ENCODE measurements at regions of chr1 and their contacts with region 1.

Region 1: GRCh38 chr1:44217809-44218410 is 4.6 kb downstream of the DMAP1 start:
- DNase-seq: peak; percentile 73
- CTCF ChIP-seq: peak; percentile 87

Region 2: GRCh38 chr1:44090429-44091252 is 127.3 kb before region 1 on chr1:
- CTCF ChIA-PET with region 1: interaction called, 10 read pairs
- POLR2A ChIA-PET with region 1: no interaction called
- DNase-seq: no peak
- CTCF ChIP-seq: no peak

Region 3: GRCh38 chr1:44103270-44104131 is 114.4 kb before region 1 on chr1:
- CTCF ChIA-PET with region 1: no interaction called
- POLR2A ChIA-PET with region 1: no interaction called
- DNase-seq: no peak
- CTCF ChIP-seq: no peak

Region 4: DNA sequence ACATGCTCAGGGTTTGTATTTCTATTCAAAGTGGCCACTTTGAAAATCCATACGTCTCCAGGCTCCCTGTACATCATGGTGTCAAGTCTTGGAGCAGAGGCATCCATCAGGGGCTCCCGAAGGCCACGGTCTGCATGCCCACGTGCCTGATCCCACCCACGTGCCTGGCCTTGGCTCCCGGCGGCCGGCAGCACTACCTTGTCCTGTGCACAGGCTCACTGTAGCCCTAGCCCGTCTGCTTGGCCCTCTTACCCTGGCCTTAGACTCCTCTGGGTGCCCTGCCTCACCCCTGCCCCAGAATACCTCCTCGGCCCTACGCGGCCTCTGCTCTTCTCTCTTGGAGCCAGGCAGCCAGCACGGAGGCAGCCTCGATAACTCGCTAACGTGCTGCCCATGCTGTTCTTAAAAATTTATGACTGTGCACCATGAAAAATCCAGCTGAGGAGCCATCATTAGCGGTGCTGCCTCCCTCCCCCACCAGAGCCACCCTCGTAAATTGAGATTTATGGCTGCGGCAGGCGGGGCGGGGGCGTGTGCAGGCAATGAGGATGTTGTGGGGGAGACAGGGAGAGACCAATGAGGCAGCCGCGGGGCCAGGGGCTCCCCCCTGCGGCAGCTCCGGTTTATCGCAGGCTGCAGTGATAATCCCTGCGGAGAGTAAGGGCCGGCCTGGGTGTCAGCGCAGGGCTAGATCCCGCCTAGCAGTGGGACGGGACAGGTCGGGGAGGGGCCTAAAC is 20.0 kb after region 1 on chr1:
- CTCF ChIA-PET with region 1: interaction called, 72 read pairs
- POLR2A ChIA-PET with region 1: no interaction called
- DNase-seq: peak; percentile 86
- CTCF ChIP-seq: peak; percentile 46

Region 5: GRCh38 chr1:44270686-44271628 is 53.0 kb after region 1 on chr1:
- CTCF ChIA-PET with region 1: interaction called, 11 read pairs
- POLR2A ChIA-PET with region 1: no interaction called
- DNase-seq: no peak
- CTCF ChIP-seq: no peak

Region 6: DNA sequence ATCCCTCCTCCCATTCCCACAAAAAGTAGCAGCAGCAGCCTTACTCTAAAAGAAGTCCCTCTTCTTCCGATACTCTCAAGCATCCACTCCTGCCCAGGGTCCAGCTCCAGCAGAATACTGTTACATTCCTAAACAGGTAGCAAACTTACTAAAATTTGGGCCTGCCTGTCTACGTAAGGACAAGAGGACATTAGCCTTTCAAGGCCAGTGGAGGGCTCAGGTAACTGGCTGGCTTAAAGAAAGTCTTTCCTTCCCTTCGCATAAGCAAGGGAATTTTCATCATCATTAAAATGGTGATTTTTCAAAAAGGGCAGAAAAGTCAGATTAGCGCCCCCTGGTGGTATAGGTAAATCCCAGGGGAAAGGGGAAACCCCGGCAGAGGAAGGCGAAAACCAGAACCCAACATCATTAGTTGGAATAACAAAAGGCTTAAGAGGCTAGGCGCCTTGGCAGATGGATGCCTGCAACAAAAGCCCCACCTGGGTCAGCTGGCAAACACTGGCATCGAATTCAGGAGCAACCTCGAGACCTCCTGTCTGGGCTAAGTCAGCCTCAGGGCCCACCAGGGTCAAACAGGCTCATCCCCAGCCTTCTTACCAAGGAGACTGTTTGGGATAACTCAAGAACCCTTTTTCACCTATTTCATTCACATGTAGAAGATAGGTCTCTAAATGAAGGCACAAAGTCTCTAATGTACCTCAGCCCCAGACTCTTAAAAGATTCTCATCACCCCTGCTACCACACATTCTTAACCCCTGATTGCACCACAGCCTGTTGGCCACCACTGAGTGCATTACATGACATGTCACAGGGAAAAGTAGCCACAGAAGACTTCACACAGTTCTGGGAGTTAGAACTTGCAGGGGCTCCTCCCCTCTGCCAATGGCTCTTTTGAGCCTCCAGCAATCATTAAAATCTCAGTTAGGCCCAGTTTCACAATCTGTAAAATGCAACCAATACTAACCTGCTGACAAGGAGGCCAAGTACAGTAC is 100.5 kb after region 1 on chr1:
- CTCF ChIA-PET with region 1: interaction called, 16 read pairs
- POLR2A ChIA-PET with region 1: no interaction called
- DNase-seq: peak; percentile 74
- CTCF ChIP-seq: peak; percentile 67